Natural killer cell (primary cell): ENCODE measurements at regions of chr16 and their contacts with region 1.

Region 1: DNA sequence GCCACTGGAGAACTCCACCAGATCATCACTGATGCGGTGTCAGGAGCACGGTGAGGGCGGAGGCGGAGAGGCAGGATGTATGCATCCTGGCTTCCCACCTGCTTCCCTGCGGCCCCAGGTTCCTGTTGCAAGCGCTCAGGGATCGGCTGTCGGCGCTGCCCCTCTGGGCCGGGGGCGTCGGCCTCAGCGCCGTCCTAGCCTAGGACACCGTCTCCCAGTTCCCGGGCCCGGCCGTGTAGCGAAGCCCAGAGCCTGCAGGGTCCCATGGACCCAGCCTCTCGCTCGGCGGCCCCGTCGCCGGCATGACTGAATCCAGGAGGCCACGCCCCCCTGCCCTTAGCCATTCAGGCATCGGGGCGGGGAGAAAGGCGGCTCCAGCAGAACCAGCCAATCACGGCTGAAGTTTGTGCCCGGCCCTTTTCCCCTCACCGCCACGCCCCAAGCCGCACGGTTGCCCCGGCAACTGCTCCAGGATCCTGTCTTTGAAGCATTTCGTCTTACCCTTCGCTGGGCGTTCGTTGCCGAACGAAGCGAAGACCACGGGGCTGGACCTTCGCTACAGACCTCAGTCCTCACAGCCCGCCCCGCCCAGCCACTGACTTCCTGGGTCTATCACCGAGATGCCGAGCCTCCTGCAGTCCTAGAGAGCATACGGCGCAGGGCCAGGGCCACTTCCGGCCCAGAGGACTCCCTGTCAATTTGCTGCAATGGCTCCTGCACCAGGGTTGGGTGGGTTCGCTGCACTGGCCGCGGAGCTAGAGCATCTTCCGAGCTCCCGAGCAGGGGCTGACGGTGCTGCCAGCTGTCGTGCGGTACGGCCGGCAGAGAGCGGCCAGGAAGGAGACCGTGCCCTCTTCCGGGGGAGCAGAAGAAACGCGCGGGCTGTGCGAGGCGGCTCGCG is 10.6 kb upstream of the ZNF213 start:
- DNase-seq: peak; percentile 96 to 98
- ATAC-seq: peak; percentile 88 to 94 (median 88)
- H3K4me3 ChIP-seq: peak overlapping the region; percentile 64
- H3K4me3 Mint-ChIP-seq: peak overlapping the region; percentile 96
- H3K27ac ChIP-seq: peak overlapping the region; percentile 66
- H3K27ac Mint-ChIP-seq: peak overlapping the region; percentile 91 to 95
- H3K4me1 ChIP-seq: peaks cover 34% of the 10 kb centered on the region
- H3K4me1 Mint-ChIP-seq: peaks cover 28 to 52% of the 10 kb centered on the region in 2 donors
- H3K27me3 ChIP-seq: no peaks in the 10 kb centered on the region
- H3K27me3 Mint-ChIP-seq: no peaks in the 10 kb centered on the region
- CTCF ChIP-seq: no peak

Region 2: GRCh38 chr16:3106205-3106928 is 17.9 kb before region 1 on chr16:
- intact Hi-C with region 1: loop called (anchors 1 kb)
- DNase-seq: peak; percentile 89 to 93
- ATAC-seq: peak; percentile 85 to 97 (median 86)
- H3K4me3 ChIP-seq: peak overlapping the region; percentile 87
- H3K4me3 Mint-ChIP-seq: peak overlapping the region; percentile 97
- H3K27ac ChIP-seq: peak overlapping the region; percentile 98
- H3K27ac Mint-ChIP-seq: peak overlapping the region; percentile 77 to 94
- H3K4me1 ChIP-seq: peaks cover 35% of the 10 kb centered on the region
- H3K4me1 Mint-ChIP-seq: peaks cover 23 to 24% of the 10 kb centered on the region in 2 donors
- H3K27me3 ChIP-seq: no peaks in the 10 kb centered on the region
- H3K27me3 Mint-ChIP-seq: no peaks in the 10 kb centered on the region
- CTCF ChIP-seq: no peak

Region 3: DNA sequence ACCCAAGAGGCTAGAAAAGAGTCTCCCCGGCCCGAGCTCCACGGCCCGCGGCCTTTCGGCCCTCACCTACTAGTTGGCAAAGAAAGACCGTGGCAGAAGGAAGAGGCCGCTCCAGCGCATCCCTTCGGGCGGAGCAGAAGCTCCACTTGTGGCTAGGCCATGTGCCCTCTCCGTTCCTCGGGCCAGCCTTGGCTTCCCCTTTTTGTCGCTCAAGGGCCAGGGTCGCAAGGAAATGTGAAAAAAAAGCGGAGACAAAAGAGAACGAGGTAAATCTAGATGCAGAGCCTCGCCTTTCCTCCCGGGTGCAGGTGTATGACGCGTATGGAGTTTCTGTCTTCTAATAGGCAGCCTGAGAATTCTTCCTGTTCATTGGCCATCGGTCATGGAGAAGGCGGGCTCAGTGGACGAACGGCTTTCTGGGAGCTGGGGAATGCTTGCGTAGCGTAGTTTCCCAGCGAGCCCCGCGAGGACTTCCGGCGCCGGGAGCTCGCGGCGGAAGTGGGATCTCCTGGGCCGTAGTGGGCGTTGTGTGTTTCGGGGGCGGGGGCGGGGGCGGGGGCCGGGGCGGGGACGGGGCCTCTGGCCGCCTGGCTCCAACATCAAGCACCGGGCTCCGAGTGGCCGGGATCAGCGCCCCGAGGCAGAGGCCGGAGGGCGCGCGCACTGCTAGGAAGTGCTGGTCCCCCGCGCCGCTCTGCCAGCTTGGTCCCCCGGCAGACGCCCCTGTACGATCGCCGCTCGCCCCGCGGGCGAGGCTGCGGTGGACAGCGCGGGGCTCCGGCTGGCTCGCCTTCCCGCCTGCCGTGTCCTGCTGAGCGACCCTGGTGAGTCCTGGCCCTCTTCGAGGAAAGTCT is 10.6 kb after region 1 on chr16 and contains the start of gene ZNF213:
- intact Hi-C with region 1: loop called (anchors 1 kb)
- DNase-seq: peak; percentile 87 to 98
- ATAC-seq: peak; percentile 96 to 98 (median 96)
- H3K4me3 ChIP-seq: peak within 1 kb of the TSS; percentile 94
- H3K4me3 Mint-ChIP-seq: peak within 1 kb of the TSS; percentile 95
- H3K27ac ChIP-seq: peak within 1 kb of the TSS; percentile 95
- H3K27ac Mint-ChIP-seq: peak within 1 kb of the TSS; percentile 96
- H3K4me1 ChIP-seq: peaks cover 19% of the 10 kb centered on the region
- H3K4me1 Mint-ChIP-seq: peaks cover 19 to 33% of the 10 kb centered on the region in 2 donors
- H3K27me3 ChIP-seq: no peaks in the 10 kb centered on the region
- H3K27me3 Mint-ChIP-seq: no peaks in the 10 kb centered on the region
- CTCF ChIP-seq: no peak
- total RNA-seq, gene ZNF213: 4.8 to 6.8 (median 5.1) TPM

Region 4: DNA sequence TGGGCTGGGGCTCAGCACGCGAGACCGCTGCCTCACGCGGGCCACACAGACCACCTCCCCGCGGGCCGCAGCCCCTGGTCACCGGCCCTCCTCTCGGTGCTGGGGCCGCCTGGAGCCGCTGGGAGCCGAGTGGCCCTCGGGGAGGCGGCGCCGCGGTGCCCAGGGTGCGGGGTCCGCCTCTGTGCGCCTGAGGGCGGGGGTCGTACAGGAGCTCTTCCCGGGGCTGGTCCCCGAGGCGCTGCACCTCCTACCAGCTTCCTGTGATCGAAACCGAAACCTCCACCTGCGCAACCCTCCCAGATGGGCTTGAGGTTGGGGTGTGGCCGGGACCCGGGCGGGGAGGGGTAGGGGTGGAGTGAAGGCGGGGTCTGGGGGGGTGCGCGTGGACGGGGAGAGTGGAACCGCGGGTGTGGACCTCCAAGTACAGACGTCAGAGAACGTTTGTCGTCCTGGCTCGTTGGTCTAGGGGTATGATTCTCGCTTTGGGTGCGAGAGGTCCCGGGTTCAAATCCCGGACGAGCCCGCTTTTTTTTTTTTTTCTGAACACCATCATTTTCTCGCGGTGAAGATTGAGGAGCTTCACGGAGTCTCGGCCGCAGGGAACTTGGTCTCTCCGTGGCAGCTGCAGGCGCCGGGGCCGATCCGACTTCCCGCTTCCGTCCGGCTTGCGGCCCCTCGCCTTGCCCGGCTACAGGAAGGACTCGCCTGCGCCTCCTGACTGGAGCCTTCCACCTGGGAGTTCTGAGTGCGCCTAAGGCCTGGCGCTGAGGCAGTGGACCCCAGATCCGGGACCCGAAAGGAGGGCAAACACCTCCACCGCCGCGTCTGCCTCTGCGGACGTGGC is 34.5 kb after region 1 on chr16:
- intact Hi-C with region 1: loop called (anchors 5 kb)
- DNase-seq: peak; percentile 76 to 97
- ATAC-seq: peak; percentile 69 to 88 (median 71)
- H3K4me3 ChIP-seq: peak overlapping the region; percentile 46
- H3K4me3 Mint-ChIP-seq: peak overlapping the region; percentile 99
- H3K27ac ChIP-seq: peak overlapping the region; percentile 77
- H3K27ac Mint-ChIP-seq: peak overlapping the region; percentile 97
- H3K4me1 ChIP-seq: peaks cover 28% of the 10 kb centered on the region
- H3K4me1 Mint-ChIP-seq: peaks cover 24 to 34% of the 10 kb centered on the region in 2 donors
- H3K27me3 ChIP-seq: no peaks in the 10 kb centered on the region
- H3K27me3 Mint-ChIP-seq: no peaks in the 10 kb centered on the region
- CTCF ChIP-seq: no peak

Region 5: GRCh38 chr16:4529085-4530060 is 1405.1 kb after region 1 on chr16:
- intact Hi-C with region 1: loop called (anchors 5 kb)
- DNase-seq: peak in 1 of 2 donors; percentile 43
- ATAC-seq: peak in 2 of 3 donors; percentile 22 to 31
- H3K4me3 ChIP-seq: no peak overlapping the region
- H3K4me3 Mint-ChIP-seq: peak overlapping the region; percentile 45
- H3K27ac ChIP-seq: peak overlapping the region; percentile 46
- H3K27ac Mint-ChIP-seq: peak overlapping the region; percentile 84 to 86
- H3K4me1 ChIP-seq: peaks cover 35% of the 10 kb centered on the region
- H3K4me1 Mint-ChIP-seq: peaks cover 22 to 44% of the 10 kb centered on the region in 2 donors
- H3K27me3 ChIP-seq: no peaks in the 10 kb centered on the region
- H3K27me3 Mint-ChIP-seq: no peaks in the 10 kb centered on the region
- CTCF ChIP-seq: no peak